PC-9 (cell line): ENCODE measurements at regions of chr16 and their contacts with region 1.

Region 1: DNA sequence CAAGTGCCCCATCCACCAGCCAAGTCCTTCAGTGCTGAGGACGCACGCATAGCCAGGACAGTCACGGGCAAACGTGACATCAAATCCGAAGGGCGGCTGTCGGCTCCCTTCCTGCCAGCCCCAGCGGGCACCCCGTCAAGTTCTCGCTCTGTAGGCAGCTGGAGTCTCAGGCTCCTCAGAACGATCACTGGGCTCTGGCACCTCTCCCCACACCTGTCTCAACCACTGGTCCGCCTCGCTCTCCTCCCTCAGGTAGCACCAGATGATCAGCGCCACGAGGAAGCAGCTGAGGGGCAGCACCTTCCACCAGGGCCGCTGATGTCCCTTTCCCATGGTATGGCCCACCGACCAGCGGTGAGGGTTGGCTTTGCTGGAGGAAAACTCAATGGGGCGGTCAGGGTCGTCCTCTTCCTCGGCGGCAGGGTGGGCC is 421 bp downstream of the UQCC4 start:
- DNase-seq: no peak
- H3K4me3 ChIP-seq: peak overlapping the region; percentile 91
- H3K27ac ChIP-seq: peak overlapping the region; percentile 24; the same call in 1 of the 2 replicates
- H3K4me1 ChIP-seq: peaks cover 47% of the 10 kb centered on the region
- H3K27me3 ChIP-seq: no peaks in the 10 kb centered on the region
- CTCF ChIP-seq: no peak

Region 2: DNA sequence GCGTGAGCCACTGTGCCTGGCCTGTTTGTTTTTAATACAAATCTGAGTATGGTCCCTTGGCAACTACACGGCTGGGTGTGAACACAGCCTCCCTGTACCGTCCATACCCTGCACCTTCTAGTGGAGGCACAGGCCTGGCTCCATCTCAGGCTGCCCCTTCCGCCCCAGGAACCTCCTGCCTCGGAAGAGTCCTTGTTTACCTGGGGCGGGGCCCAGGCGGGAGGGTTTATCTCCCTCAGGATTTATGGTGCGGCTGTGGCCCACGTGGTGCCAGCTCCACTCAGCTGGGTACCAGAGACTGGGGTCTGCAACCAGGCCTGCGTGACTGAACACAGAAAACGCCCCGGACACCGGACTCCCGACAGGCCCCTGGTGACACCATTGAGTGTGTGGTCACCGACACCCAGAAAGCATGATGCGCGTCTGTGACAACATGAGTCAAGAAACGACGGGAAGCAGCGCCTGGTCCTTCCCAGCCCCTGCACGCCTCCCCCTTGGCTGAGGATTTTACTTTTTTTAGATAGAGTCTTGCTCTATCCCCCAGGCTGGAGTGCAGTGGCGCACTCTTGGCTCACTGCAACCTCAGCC is 24.6 kb before region 1 on chr16:
- CTCF ChIA-PET with region 1: no interaction called
- POLR2A ChIA-PET with region 1: no interaction called
- intact Hi-C with region 1: no loop called
- DNase-seq: no peak
- H3K4me3 ChIP-seq: no peak overlapping the region
- H3K27ac ChIP-seq: no peak overlapping the region
- H3K4me1 ChIP-seq: no peaks in the 10 kb centered on the region
- H3K27me3 ChIP-seq: no peaks in the 10 kb centered on the region
- CTCF ChIP-seq: no peak

Region 3: GRCh38 chr16:1492923-1493745 is 73.0 kb after region 1 on chr16 and contains the start of gene TELO2:
- CTCF ChIA-PET with region 1: no interaction called
- POLR2A ChIA-PET with region 1: interaction called, 6 read pairs
- intact Hi-C with region 1: loop called (anchors 5 kb)
- DNase-seq: peak; percentile 55 to 88
- H3K4me3 ChIP-seq: peak within 1 kb of the TSS; percentile 98
- H3K27ac ChIP-seq: peak within 1 kb of the TSS; percentile 64
- H3K4me1 ChIP-seq: peaks cover 18% of the 10 kb centered on the region; the same call in 1 of the 2 replicates
- H3K27me3 ChIP-seq: no peaks in the 10 kb centered on the region
- CTCF ChIP-seq: no peak
- total RNA-seq, gene TELO2: 56.0 and 67.6 TPM in 2 replicates